Panc1 (cell line): ENCODE measurements at regions of chr22 and their contacts with region 1.

Region 1: DNA sequence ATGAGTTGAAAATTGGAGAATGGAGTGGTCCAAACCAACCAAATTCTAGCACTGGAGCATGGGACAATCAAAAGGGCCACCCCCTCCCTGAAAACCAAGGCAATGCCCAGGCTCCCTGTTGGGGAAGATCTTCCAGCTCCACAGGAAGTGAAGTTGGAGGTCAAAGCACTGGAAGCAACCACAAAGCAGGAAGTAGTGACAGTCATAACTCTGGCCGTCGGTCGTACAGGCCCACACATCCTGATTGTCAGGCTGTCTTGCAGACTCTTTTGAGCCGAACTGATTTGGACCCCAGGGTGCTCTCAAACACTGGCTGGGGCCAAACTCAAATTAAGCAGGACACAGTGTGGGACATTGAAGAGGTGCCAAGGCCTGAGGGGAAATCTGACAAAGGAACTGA is 80.5 kb upstream of the ADSL start:
- DNase-seq: no peak
- ATAC-seq: no peak
- H3K4me3 ChIP-seq: no peak overlapping the region
- H3K27ac ChIP-seq: no peak overlapping the region
- H3K4me1 ChIP-seq: no peaks in the 10 kb centered on the region
- H3K27me3 ChIP-seq: no peaks in the 10 kb centered on the region
- CTCF ChIP-seq: no peak

Region 2: GRCh38 chr22:39859903-39860588 is 405.7 kb before region 1 on chr22:
- CTCF ChIA-PET with region 1: no interaction called
- POLR2A ChIA-PET with region 1: no interaction called
- in situ Hi-C with region 1: no loop called
- intact Hi-C with region 1: no loop called
- DNase-seq: no peak
- ATAC-seq: no peak
- H3K4me3 ChIP-seq: no peak overlapping the region
- H3K27ac ChIP-seq: no peak overlapping the region
- H3K4me1 ChIP-seq: no peaks in the 10 kb centered on the region
- H3K27me3 ChIP-seq: peaks cover 7% of the 10 kb centered on the region
- CTCF ChIP-seq: no peak

Region 3: GRCh38 chr22:40231618-40232313 is 34.0 kb before region 1 on chr22:
- CTCF ChIA-PET with region 1: interaction called, 10 read pairs
- POLR2A ChIA-PET with region 1: no interaction called
- in situ Hi-C with region 1: no loop called
- intact Hi-C with region 1: no loop called
- DNase-seq: no peak
- ATAC-seq: no peak
- H3K4me3 ChIP-seq: no peak overlapping the region
- H3K27ac ChIP-seq: no peak overlapping the region
- H3K4me1 ChIP-seq: no peaks in the 10 kb centered on the region
- H3K27me3 ChIP-seq: no peaks in the 10 kb centered on the region
- CTCF ChIP-seq: no peak

Region 4: GRCh38 chr22:40400159-40400558 is 134.4 kb after region 1 on chr22:
- CTCF ChIA-PET with region 1: no interaction called
- POLR2A ChIA-PET with region 1: no interaction called
- in situ Hi-C with region 1: no loop called
- intact Hi-C with region 1: no loop called
- DNase-seq: no peak
- ATAC-seq: no peak
- H3K4me3 ChIP-seq: no peak overlapping the region
- H3K27ac ChIP-seq: no peak overlapping the region
- H3K4me1 ChIP-seq: no peaks in the 10 kb centered on the region
- H3K27me3 ChIP-seq: no peaks in the 10 kb centered on the region
- CTCF ChIP-seq: no peak